Lower lobe of right lung (tissue), 2 donors: ENCODE measurements at regions of chr5 and their contacts with region 1.

Region 1: GRCh38 chr5:128498844-128499455 is 39.1 kb downstream of the FBN2 start:
- DNase-seq: no peak
- ATAC-seq: peak in 1 of 2 donors; percentile 70
- H3K4me3 ChIP-seq: no peak overlapping the region
- H3K27ac ChIP-seq: no peak overlapping the region
- H3K4me1 ChIP-seq: no peaks in the 10 kb centered on the region
- H3K27me3 ChIP-seq: no peaks in the 10 kb centered on the region
- CTCF ChIP-seq: peak; percentile 45

Region 2: GRCh38 chr5:128213340-128213739 is 285.6 kb before region 1 on chr5:
- intact Hi-C with region 1: loop called (anchors 5 kb)
- DNase-seq: no peak
- ATAC-seq: peak in 1 of 2 donors; percentile 56
- H3K4me3 ChIP-seq: no peak overlapping the region
- H3K27ac ChIP-seq: no peak overlapping the region
- H3K4me1 ChIP-seq: no peaks in the 10 kb centered on the region
- H3K27me3 ChIP-seq: no peaks in the 10 kb centered on the region
- CTCF ChIP-seq: peak; percentile 69

Region 3: GRCh38 chr5:128378632-128379031 is 120.3 kb before region 1 on chr5:
- intact Hi-C with region 1: no loop called
- DNase-seq: no peak
- ATAC-seq: no peak
- H3K4me3 ChIP-seq: no peak overlapping the region
- H3K27ac ChIP-seq: no peak overlapping the region
- H3K4me1 ChIP-seq: no peaks in the 10 kb centered on the region
- H3K27me3 ChIP-seq: no peaks in the 10 kb centered on the region
- CTCF ChIP-seq: no peak